CD4-positive, alpha-beta T cell (primary cell): ENCODE measurements at regions of chr9 and their contacts with region 1.

Region 1: DNA sequence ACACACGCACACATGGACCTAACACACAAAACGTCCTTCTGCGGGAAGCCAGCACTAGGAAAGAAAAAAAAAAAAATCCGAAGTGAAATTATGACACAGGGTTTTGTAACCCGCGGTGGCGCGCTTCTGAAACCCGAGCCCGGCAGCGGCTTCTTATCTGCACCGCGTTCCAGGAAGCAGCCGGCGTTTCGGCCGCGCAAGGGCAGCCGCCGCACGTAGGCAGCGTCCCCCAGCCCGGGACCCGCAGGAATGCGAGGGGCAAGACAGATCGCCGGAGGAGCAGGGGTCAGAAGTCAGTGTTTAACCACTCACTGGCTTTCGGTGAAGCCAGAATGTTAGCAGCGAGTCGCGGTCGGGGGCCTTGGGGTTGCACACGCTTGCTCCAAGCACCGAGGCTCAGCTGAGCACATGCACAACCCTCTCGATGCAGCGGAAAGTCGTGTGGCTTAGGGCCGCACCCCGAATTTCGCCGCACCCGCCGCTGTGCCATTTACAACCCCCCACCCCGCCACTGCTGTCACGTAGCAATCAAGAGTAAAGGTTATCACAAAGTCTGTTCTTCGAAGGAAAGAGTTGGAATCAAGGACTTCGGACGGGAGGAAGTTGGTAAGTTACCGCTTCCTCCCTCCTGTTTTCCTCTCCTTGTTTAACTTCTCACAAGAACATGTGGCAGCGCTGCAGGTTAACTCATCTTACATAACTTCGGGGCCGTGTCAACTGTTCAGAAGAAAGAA is 167.9 kb downstream of the AUH start:
- DNase-seq: peak; percentile 27 to 77 (median 44)
- ATAC-seq: peak; percentile 80
- H3K4me3 ChIP-seq: peak overlapping the region; percentile 55
- H3K4me3 Mint-ChIP-seq: peak overlapping the region; percentile 83
- H3K27ac ChIP-seq: peak overlapping the region; percentile 6 to 15
- H3K27ac Mint-ChIP-seq: peak overlapping the region; percentile 77
- H3K4me1 ChIP-seq: peaks cover 29% of the 10 kb centered on the region
- H3K4me1 Mint-ChIP-seq: peaks cover 30% of the 10 kb centered on the region
- H3K27me3 ChIP-seq: no peaks in the 10 kb centered on the region
- H3K27me3 Mint-ChIP-seq: no peaks in the 10 kb centered on the region
- CTCF ChIP-seq: no peak

Region 2: GRCh38 chr9:90860826-90861225 is 333.0 kb before region 1 on chr9:
- CTCF ChIA-PET with region 1: no interaction called
- POLR2A ChIA-PET with region 1: no interaction called
- intact Hi-C with region 1: no loop called
- DNase-seq: peak in 2 of 14 experiments; percentile 45 to 48
- ATAC-seq: no peak
- H3K4me3 ChIP-seq: no peak overlapping the region
- H3K4me3 Mint-ChIP-seq: no peak overlapping the region
- H3K27ac ChIP-seq: no peak overlapping the region
- H3K27ac Mint-ChIP-seq: no peak overlapping the region
- H3K4me1 ChIP-seq: peaks cover 16% of the 10 kb centered on the region
- H3K4me1 Mint-ChIP-seq: peaks cover 27% of the 10 kb centered on the region
- H3K27me3 ChIP-seq: peaks cover 0 to 2% of the 10 kb centered on the region in 2 experiments
- H3K27me3 Mint-ChIP-seq: no peaks in the 10 kb centered on the region
- CTCF ChIP-seq: no peak

Region 3: GRCh38 chr9:91101611-91102168 is 92.1 kb before region 1 on chr9:
- CTCF ChIA-PET with region 1: no interaction called
- POLR2A ChIA-PET with region 1: interaction called, 6 read pairs
- intact Hi-C with region 1: loop called in 1 of 2 experiments (anchors 1 kb)
- DNase-seq: peak; percentile 61 to 93 (median 68)
- ATAC-seq: peak; percentile 89
- H3K4me3 ChIP-seq: no peak overlapping the region
- H3K4me3 Mint-ChIP-seq: peak overlapping the region; percentile 64
- H3K27ac ChIP-seq: no peak overlapping the region
- H3K27ac Mint-ChIP-seq: peak overlapping the region; percentile 50
- H3K4me1 ChIP-seq: peaks cover 36% of the 10 kb centered on the region
- H3K4me1 Mint-ChIP-seq: peaks cover 39% of the 10 kb centered on the region
- H3K27me3 ChIP-seq: peaks cover 0 to 4% of the 10 kb centered on the region in 2 experiments
- H3K27me3 Mint-ChIP-seq: peaks cover 22% of the 10 kb centered on the region
- CTCF ChIP-seq: no peak

Region 4: GRCh38 chr9:91131433-91131839 is 62.4 kb before region 1 on chr9:
- CTCF ChIA-PET with region 1: no interaction called
- POLR2A ChIA-PET with region 1: no interaction called
- intact Hi-C with region 1: loop called in 1 of 2 experiments (anchors 10 kb)
- DNase-seq: peak in 8 of 14 experiments; percentile 13 to 70 (median 26)
- ATAC-seq: peak; percentile 77
- H3K4me3 ChIP-seq: no peak overlapping the region
- H3K4me3 Mint-ChIP-seq: no peak overlapping the region
- H3K27ac ChIP-seq: no peak overlapping the region
- H3K27ac Mint-ChIP-seq: no peak overlapping the region
- H3K4me1 ChIP-seq: peaks cover 5% of the 10 kb centered on the region
- H3K4me1 Mint-ChIP-seq: peaks cover 5% of the 10 kb centered on the region
- H3K27me3 ChIP-seq: no peaks in the 10 kb centered on the region
- H3K27me3 Mint-ChIP-seq: no peaks in the 10 kb centered on the region
- CTCF ChIP-seq: no peak

Region 5: GRCh38 chr9:91150998-91151717 is 42.7 kb before region 1 on chr9:
- CTCF ChIA-PET with region 1: interaction called, 3 read pairs
- POLR2A ChIA-PET with region 1: interaction called, 4 read pairs
- intact Hi-C with region 1: loop called in 1 of 2 experiments (anchors 1 kb)
- DNase-seq: peak in 3 of 14 experiments; percentile 80 to 88 (median 84)
- ATAC-seq: peak; percentile 86
- H3K4me3 ChIP-seq: no peak overlapping the region
- H3K4me3 Mint-ChIP-seq: peak overlapping the region; percentile 7
- H3K27ac ChIP-seq: no peak overlapping the region
- H3K27ac Mint-ChIP-seq: peak overlapping the region; percentile 43
- H3K4me1 ChIP-seq: peaks cover 24% of the 10 kb centered on the region
- H3K4me1 Mint-ChIP-seq: peaks cover 51% of the 10 kb centered on the region
- H3K27me3 ChIP-seq: no peaks in the 10 kb centered on the region
- H3K27me3 Mint-ChIP-seq: no peaks in the 10 kb centered on the region
- CTCF ChIP-seq: no peak

Region 6: GRCh38 chr9:91361291-91362050 is 167.6 kb after region 1 on chr9 and contains the start of gene AUH:
- CTCF ChIA-PET with region 1: no interaction called
- POLR2A ChIA-PET with region 1: interaction called, 9 read pairs
- intact Hi-C with region 1: loop called in 1 of 2 experiments (anchors 10 kb)
- DNase-seq: peak; percentile 73 to 95 (median 82)
- ATAC-seq: peak; percentile 96
- H3K4me3 ChIP-seq: peak within 1 kb of the TSS; percentile 67
- H3K4me3 Mint-ChIP-seq: peak within 1 kb of the TSS; percentile 99
- H3K27ac ChIP-seq: peak within 1 kb of the TSS in 1 of 2 donors; percentile 58
- H3K27ac Mint-ChIP-seq: peak within 1 kb of the TSS; percentile 91
- H3K4me1 ChIP-seq: peaks cover 27% of the 10 kb centered on the region
- H3K4me1 Mint-ChIP-seq: peaks cover 51% of the 10 kb centered on the region
- H3K27me3 ChIP-seq: no peaks in the 10 kb centered on the region
- H3K27me3 Mint-ChIP-seq: no peaks in the 10 kb centered on the region
- CTCF ChIP-seq: no peak
- total RNA-seq, gene AUH: 16.2 to 17.4 TPM

Region 7: DNA sequence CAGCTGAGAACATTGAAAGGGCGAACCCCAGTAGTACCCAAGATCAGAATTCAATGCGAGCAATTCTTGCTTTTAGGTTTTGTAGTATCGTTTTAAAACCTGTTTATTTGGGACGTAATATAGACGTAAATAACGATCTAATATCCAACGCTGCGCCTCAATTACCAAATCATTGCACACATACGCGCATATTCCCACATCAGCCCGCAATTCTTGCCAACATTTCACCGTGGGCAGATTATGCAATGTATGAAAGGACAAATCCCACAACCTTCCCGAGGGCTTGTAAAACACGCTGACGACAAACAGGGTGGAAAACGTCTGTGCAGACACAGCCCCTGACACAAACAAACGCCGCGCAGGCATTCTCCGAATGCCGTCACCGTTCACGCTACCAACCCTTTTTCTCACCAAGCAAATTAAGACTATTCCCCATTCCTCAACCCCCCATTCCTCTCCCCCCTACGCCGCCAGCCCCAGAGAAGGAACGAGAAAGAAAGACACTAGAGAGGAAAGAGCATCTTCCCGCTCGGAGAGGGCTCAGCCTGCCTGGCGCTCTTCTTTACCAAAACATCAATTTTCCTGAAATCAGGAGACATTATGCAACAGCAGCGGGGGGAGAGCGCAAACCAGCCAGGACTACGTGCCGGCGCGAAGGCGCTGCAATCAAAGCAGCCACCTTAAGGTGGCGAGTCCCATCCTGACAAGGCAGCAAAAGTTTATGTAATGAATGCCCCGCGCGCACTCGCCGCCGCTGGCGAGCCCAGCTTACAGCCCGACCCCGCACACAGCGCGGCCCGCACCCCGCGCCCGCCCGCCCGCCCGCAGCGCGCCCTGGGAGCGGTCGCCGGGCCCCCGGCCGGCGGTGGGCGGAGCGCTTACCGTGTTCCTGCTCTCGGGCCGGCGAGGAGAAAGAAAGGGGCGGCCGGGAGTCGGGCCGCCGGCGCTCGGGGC is 229.2 kb after region 1 on chr9:
- CTCF ChIA-PET with region 1: no interaction called
- POLR2A ChIA-PET with region 1: no interaction called
- intact Hi-C with region 1: loop called in 1 of 2 experiments (anchors 5 kb)
- DNase-seq: peak; percentile 22 to 85 (median 49)
- ATAC-seq: peak; percentile 50
- H3K4me3 ChIP-seq: peak overlapping the region; percentile 73
- H3K4me3 Mint-ChIP-seq: peak overlapping the region; percentile 96
- H3K27ac ChIP-seq: no peak overlapping the region
- H3K27ac Mint-ChIP-seq: peak overlapping the region; percentile 82
- H3K4me1 ChIP-seq: peaks cover 45% of the 10 kb centered on the region
- H3K4me1 Mint-ChIP-seq: peaks cover 45% of the 10 kb centered on the region
- H3K27me3 ChIP-seq: peaks cover 22 to 42% of the 10 kb centered on the region in 2 experiments
- H3K27me3 Mint-ChIP-seq: peaks cover 52% of the 10 kb centered on the region
- CTCF ChIP-seq: peak; percentile 16